ENCODE measurements at regions of chr6 and their contacts with region 1.

Region 1: DNA sequence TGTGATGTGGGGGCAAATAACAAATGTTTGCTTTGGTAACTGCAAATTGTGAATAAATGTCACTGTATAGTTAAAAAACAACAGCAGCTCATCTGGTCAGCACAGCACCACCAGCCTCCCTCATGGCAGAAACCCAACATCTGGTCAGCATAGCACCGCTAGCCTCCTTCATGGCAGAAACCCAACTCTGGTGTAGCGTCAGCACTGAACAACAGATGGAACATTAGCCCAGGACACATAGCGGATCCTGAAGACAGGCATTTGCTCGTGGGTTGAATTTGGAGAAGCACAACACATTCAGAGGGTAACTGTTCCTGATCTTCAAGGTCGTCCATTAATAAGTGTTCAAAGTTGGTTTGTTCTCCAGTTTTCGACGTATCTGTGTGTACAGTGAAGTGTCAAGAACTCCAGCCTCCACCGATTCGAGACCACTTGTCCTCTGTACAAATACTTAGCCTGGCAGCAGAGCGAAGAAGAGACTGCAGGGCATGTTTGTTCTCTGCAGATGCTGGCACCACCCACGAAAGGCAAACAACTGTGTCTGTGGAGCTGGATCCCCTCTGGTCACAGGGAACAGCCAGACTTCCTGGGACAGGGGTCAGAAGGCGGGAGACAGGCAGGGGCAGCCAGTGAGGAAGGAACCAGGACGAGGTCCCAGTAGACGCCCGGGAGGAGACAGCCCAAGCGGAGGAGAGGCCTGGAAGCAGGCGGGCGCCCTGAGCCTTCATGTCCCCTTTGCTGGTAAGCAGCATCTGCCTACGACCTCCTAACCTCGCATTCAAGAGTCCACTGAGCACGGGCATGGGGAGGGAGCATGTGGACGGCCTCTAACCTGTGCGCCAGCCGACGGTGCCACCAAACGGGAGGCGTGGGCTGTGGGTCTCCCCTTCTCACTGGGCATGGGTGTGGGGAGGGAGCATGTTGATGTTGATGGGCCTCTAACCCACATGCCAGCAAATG is 265.6 kb downstream of the DLL1 start:
- DNase-seq: no peak
- ATAC-seq: peak; percentile 60 to 80

Region 2: DNA sequence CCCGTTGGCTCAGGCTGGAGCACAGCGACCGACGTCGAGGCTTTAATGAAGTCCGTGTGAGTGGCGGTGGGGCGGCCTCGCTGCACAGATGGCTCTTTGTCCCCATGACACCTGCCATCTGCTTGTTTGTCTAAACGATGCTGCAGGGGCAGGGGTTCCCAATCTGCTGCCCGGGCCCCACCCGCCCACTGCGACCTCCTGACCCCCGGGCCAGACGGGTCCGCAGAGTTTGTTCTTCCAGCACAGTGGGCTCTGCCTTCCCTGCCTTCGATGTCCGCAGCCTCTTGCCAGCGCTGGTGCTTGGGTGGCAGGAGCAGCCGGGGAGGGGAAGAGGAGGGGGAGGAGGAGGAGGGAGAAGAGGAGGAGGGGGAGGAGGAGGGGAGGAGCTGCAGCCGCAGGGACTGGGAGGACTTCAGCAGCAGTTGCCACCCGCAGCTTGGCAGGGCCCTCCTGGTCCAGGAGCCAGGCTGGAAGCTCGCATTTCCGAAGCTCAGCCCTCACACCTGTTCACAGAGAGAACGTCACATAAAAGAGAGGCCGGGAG is 55.7 kb after region 1 on chr6:
- intact Hi-C with region 1: no loop called
- DNase-seq: peak; percentile 12
- ATAC-seq: no peak

Region 3: DNA sequence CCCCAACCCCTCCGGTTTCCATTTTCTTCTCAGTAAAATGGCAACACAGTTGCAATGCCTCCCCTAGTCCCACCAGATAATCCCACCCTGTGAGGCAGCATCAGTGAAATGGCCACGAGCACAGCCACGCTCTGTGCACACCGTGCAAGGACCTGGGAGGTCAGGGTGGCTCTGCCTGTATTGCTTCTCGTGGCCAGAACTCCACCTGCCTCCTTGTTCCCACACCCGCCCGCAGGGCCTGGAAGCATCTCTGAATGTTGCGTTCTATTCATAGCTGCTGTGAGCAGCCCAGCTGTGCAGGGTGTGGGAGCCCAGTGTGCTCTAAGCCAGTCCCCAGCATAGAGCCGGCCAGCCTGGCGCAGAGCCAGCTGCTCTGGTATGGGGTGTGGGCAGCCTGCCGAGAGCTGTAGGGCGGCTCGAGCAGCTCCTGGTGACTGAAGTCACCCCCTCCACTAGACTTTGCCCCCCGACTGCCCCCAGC is 104.5 kb after region 1 on chr6:
- intact Hi-C with region 1: loop called in 1 of 2 experiments (anchors 10 kb)
- DNase-seq: peak; percentile 69
- ATAC-seq: peak; percentile 86 to 90

Region 4: DNA sequence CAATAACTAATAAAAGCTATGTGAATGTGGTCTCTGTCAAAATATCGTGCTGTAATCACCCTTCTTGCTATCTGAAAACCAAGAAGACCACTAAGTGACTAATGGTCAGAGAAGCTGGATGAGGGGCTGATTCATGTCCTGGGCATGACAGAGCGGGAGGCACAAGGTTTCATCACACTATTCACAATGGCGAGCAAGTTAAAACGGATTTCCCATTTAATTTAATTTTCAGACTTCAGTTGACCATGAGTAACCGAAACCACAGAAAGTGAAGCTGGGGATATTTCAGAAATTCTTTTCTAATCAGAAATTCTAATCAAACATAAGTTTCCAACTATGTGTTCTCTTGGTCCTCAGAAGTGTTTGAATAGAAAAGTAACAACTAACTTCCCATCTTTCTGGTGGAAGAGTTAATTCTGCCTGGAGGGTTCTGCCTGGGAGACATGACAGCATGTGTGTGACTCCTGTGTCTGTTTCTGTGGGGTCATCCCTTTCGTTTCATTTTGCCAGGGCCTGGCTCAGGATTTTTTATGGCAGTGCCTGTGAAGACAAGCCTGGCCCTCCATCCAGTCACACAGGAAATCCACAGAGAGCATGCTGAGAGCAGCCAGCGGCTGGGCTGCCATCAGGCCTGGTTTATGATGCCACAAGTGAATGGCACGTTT is 380.2 kb after region 1 on chr6:
- intact Hi-C with region 1: no loop called
- DNase-seq: no peak
- ATAC-seq: no peak